Activated CD4-positive, alpha-beta T cell treated with anti-CD3 and anti-CD28 coated beads, Interleukin-2, amount 10 ng/mL, durations not matched to agents 24 days and 14 days (primary cell): ENCODE measurements at regions of chr11 and their contacts with region 1.

Region 1: GRCh38 chr11:118216621-118217481 is 8.0 kb downstream of the JAML start:
- DNase-seq: peak; percentile 84
- H3K4me3 Mint-ChIP-seq: peak overlapping the region; percentile 86
- H3K27ac Mint-ChIP-seq: peak overlapping the region; percentile 100
- H3K4me1 Mint-ChIP-seq: peaks cover 87% of the 10 kb centered on the region
- H3K27me3 Mint-ChIP-seq: no peaks in the 10 kb centered on the region

Region 2: DNA sequence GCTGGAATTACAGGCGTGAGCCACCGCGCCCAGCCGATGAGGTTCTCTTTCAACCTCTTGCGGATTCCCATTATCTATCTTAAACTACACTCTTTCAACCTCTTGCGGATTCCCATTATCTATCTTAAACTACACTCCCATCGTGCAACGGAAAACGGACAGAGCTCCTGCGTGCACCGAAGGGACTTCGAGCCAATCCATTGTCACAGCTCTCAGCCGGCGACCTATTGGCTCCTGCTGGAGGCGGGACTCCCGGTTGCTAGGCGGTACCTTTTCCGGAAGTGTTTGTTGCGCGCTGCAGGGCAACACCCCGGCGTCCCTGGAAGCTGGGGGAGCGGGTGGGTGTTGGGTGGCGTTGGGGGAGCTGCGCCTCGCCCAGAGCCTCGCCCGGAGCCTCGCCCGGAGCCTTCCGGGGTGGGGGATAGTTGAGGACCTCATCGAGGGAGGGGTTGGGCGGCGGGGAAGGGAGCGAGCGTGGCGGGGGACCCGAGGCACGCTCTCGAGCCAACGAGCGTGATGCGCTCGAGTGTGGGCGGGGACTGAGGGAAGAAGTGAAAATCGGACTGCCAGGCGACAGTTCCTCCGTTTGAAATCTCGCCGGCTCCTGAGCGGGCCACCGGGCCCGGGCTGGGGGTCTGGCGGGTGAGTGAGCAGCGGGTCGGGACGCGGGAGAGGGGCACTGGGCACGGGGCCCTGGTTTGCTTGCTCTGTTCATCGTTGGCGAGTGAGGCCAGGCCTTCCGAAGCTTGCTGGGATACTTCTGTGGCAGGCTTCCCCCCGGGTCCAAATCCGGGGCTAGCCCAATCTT is 889.1 kb before region 1 on chr11 and contains the start of gene CEP164:
- intact Hi-C with region 1: no loop called
- DNase-seq: peak; percentile 98
- H3K4me3 Mint-ChIP-seq: peak within 1 kb of the TSS; percentile 62
- H3K27ac Mint-ChIP-seq: peak within 1 kb of the TSS; percentile 68
- H3K4me1 Mint-ChIP-seq: peaks cover 15% of the 10 kb centered on the region
- H3K27me3 Mint-ChIP-seq: peaks cover 9% of the 10 kb centered on the region
- total RNA-seq, gene CEP164: 39.0 and 40.1 TPM in 2 replicates

Region 3: DNA sequence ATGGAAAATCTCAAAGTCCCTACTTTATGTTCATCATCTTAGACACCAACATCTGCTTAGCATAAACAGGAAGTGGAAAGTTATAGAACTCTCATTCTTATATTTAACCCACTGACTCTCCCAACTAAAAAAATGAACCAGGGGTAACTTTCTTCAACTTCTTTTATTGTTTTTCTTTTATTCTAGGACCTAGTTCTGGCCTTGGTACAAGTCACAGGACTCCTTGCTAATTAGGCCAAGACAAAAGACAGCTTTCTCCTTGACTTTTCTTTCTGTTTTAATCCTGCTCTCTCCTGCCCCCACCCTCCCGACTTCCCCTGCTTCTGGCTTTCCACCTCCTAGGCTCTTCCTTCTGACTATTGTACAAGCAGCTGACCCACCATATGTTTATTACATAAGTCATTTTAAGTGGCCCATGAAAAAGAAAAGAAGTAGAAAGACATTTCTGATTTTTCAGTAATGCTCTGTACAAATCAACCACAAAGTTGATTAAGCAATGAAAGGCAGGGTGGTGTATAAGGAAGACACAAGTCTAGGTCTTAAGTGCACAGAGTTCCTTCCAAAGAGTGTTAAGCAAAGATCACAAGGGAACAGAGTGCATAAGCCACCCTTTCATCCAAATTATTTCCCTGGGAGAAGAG is 10.3 kb before region 1 on chr11:
- intact Hi-C with region 1: loop called (anchors 1 kb)
- DNase-seq: no peak
- H3K4me3 Mint-ChIP-seq: peak overlapping the region; percentile 65
- H3K27ac Mint-ChIP-seq: no peak overlapping the region
- H3K4me1 Mint-ChIP-seq: peaks cover 47% of the 10 kb centered on the region
- H3K27me3 Mint-ChIP-seq: no peaks in the 10 kb centered on the region

Region 4: DNA sequence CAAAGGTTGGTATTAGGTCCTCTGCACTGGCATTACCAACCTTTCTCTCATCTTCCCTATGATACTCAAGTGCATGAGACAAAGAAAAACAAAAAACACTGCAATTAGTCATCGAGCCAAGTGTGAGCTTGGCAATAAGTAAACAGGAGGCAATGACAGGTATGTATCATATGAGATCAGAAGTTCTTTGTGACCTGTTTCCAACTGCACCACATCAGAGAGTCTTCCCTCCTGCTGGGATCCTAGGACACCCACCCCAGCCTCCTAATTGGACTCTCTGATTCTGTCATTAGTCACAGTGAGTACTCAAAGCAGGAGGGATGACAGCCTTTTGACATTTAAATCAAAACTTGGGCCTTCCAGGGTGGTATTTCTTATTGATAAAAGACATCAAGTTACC is 15.8 kb after region 1 on chr11:
- intact Hi-C with region 1: loop called (anchors 1 kb)
- DNase-seq: peak; percentile 64
- H3K4me3 Mint-ChIP-seq: peak overlapping the region; percentile 10
- H3K27ac Mint-ChIP-seq: no peak overlapping the region
- H3K4me1 Mint-ChIP-seq: peaks cover 53% of the 10 kb centered on the region
- H3K27me3 Mint-ChIP-seq: no peaks in the 10 kb centered on the region

Region 5: DNA sequence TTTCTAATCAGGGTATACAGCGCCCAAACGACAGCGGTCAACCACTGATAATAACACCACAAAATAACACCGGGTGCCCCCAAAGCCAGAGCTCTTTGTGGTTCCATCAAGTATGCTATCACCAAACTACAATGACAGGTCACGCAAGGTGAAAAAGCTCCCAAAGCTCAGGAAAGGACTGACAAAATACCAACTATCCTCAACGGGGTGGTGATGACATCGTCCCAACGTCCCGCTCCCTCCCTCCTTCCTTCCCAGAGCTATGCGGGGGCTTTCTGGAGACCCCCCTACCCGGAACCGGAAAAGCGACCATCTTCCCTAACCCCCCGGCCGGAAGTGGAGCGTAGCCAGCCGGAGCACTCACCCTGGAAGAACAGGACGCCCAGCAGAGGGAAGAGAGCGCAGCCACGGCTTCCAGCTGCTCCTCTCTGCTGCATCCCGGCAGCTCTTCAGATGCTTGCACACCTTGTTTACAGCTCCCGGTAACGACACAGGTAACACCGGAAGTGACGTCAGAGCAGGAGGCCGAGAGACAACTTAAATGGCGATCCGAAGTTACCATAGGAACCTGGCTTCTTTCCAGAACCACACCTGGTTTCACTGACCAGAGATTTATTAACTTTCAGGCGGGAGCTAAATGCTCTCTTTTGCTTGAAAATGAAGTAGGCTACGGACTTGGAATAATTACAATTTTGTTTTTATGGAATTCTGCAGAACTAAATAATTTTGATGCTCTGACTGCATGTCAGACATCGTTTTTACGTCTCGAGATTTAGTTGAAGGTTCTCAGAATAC is 35.2 kb after region 1 on chr11 and contains the start of gene MPZL3:
- intact Hi-C with region 1: loop called (anchors 1 kb)
- DNase-seq: peak; percentile 94
- H3K4me3 Mint-ChIP-seq: peak within 1 kb of the TSS; percentile 97
- H3K27ac Mint-ChIP-seq: peak within 1 kb of the TSS; percentile 97
- H3K4me1 Mint-ChIP-seq: peaks cover 41% of the 10 kb centered on the region
- H3K27me3 Mint-ChIP-seq: no peaks in the 10 kb centered on the region
- total RNA-seq, gene MPZL3: 64.6 and 65.4 TPM in 2 replicates